ENCODE measurements at regions of chr21 and their contacts with region 1.

Region 1: DNA sequence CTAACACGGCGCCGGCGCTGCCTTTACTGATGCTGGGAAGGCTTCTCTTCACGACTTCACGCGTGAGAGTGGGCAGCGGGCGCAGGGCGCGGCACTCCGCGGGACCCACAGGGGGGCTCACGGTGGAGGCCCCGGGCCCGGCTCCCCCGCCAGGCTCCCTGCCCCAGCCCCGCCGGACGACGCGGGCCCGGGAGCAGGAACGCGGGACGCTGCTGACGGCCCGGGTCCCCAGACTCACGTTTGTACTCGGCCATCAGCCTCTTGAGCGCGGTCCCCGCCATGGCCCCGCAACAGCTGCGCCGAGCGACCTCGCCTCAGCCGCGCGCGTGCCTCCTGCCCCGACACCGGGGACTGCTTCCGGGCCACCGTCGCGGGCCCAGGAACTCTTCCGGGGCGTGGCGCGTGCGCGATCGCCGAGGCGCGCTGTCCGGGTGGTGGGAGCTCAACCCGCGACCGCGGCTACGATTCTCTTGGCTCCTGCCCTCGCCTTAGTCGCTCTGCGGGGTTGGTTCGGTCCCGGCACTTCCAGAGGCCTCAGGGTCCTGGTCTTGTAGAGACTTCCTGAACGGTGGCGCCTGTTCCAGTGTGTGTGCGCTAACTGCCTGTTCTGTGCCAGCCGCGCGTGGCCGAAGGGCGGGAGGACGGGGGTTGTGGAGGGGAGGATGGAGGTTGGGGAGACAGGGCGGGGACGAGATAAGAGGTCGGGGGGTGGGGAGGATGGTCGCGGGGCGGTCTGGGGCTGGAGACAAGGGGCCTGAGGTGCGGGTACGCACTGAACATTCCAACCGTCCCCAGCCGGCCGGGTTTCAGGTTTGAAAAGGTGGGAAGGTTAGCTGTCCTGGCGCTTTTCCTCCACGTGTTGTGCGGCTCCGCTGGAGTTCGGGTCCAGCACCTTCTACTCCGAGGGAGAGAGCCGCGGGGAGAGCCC is at the start of gene UBE2G2:
- DNase-seq: peak; percentile 59
- H3K4me3 ChIP-seq: peak within 1 kb of the TSS; percentile 84 to 88
- H3K27ac ChIP-seq: peak within 1 kb of the TSS; percentile 58 to 61
- H3K4me1 ChIP-seq: peaks cover 12% of the 10 kb centered on the region
- H3K27me3 ChIP-seq: no peaks in the 10 kb centered on the region
- CTCF ChIP-seq: peak in 2 of 4 experiments; percentile 11 to 27
- POLR2A ChIP-seq: peak; percentile 39
- total RNA-seq, gene UBE2G2: 46.9 to 75.7 TPM

Region 2: DNA sequence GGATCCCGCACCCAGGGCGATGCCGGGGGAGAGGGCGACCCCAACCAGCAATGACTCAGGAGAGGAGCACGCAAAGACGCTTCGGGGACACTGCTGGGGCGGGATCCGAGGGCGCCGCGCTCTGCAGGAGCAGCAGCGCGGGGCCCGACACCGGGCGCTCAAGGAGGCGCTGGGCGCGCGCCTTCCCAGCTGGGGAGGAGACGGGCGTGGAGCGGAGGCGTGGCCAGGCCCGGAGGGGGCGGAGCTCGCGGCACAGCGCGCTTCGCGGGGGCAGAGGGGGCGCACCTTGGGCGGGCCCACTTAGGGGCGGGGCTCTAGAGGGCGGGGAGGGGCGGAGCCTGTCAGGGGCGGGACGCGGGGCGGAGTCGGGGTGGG is 15.8 kb after region 1 on chr21:
- intact Hi-C with region 1: loop called (anchors 2 kb)
- DNase-seq: peak; percentile 91
- H3K4me3 ChIP-seq: peak overlapping the region; percentile 83 to 85
- H3K27ac ChIP-seq: peak overlapping the region; percentile 83 to 88
- H3K4me1 ChIP-seq: peaks cover 2% of the 10 kb centered on the region
- H3K27me3 ChIP-seq: no peaks in the 10 kb centered on the region
- CTCF ChIP-seq: no peak
- POLR2A ChIP-seq: peak; percentile 34

Region 3: DNA sequence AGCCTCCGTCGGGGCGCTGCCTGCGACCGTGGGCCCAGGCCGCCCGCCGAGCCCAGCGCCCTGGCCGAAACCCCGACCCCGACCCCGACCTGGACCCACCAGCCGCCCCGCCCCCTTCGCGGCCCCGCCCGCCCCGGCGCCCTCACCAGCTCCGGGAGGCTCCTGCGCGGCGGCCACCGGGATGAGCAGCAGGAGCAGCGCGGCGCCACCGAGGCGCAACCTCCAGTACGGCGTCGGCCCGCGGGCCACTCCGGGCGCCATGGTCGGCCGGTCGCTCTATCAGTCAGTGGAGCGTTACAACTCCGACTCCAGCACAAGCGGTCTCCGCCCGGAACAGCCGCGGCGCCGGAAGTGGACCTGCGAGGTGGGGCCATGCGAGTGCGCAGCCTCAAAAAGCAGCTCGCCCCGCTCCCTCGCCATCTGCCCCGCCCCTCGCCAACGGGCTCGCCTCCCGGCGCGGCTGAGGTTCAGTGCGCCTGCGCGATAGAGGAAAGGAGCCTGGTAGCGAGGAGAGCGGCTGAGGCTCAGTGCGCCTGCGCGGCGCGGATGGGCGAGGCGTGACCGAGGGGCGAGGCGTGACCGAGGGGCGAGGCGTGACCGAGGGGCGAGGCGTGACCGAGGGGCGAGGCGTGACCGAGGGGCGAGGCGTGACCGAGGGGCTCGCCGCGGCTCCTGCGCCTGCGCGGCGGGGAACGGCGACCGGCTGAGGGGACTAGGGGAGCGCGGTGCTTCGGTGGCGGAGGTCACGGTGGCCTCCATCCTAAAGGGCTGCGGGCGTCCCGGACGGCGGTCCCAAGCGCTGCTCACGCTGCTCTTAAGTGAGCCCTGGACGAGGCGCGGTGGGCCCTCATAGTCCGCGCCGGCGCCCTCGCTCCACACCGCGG is 71.9 kb after region 1 on chr21 and contains the start of gene PTTG1IP:
- intact Hi-C with region 1: loop called (anchors 2 kb)
- DNase-seq: peak; percentile 97
- H3K4me3 ChIP-seq: peak within 1 kb of the TSS; percentile 77 to 84
- H3K27ac ChIP-seq: peak within 1 kb of the TSS; percentile 80 to 86
- H3K4me1 ChIP-seq: peaks cover 23% of the 10 kb centered on the region
- H3K27me3 ChIP-seq: no peaks in the 10 kb centered on the region
- CTCF ChIP-seq: peak in 1 of 4 experiments; percentile 19
- POLR2A ChIP-seq: peak; percentile 84
- total RNA-seq, gene PTTG1IP: 216 to 244 TPM

Region 4: GRCh38 chr21:44932408-44933181 is 130.9 kb after region 1 on chr21:
- intact Hi-C with region 1: loop called (anchors 5 kb)
- DNase-seq: no peak
- H3K4me3 ChIP-seq: peak overlapping the region; percentile 26 to 37
- H3K27ac ChIP-seq: no peak overlapping the region
- H3K4me1 ChIP-seq: peaks cover 12% of the 10 kb centered on the region
- H3K27me3 ChIP-seq: peaks cover 10% of the 10 kb centered on the region
- CTCF ChIP-seq: peak; percentile 35 to 76 (median 54)
- POLR2A ChIP-seq: no peak

Region 5: GRCh38 chr21:45140346-45140940 is 338.7 kb after region 1 on chr21:
- intact Hi-C with region 1: no loop called
- DNase-seq: peak; percentile 63
- H3K4me3 ChIP-seq: no peak overlapping the region
- H3K27ac ChIP-seq: no peak overlapping the region
- H3K4me1 ChIP-seq: no peaks in the 10 kb centered on the region
- H3K27me3 ChIP-seq: no peaks in the 10 kb centered on the region
- CTCF ChIP-seq: peak; percentile 36 to 87 (median 72)
- POLR2A ChIP-seq: no peak